Common myeloid progenitor, CD34-positive (primary cell): ENCODE measurements at regions of chr11 and their contacts with region 1.

Region 1: DNA sequence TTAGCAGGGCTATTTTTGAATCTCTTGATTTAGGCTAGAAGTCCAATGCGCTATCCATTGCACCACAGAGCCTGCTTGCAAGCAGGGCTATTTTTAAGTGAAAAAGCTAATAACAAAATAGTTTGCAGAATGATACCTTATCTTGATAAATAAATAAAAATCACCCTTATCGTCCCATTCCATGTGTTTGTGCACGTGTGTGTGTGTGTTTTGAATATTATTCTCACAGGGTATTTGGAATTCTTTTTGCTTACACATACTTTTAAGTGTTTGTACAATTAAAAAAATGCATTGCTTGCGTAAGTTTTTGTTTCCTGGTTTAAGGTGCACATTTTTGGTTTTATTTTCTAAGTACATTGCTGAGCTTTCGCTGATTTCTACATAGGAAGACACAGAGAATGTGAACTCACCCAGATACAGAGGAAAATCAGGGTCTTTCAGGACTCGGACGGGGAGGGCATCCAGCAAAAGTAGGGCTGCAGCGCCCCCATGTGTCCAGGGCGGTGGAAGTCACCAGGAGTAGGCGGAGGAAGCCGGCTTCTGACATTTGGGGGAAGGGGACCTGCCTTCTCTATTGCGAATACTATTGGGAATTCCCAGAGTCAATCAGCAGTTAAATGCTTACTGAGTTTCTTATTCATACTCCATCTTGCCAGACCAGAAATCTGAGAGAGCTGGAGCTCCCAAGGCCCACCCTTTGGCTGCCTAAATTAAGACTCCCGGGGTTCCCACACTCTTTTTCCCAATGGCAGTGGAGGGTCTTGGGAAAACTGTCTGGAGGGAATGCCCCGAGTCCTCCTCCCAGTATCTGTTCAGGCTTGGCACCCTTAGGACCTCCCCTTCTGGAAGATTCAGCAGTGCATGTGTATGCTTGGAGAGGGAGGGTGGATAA is 27.2 kb downstream of the SLC1A2 start:
- DNase-seq: peak; percentile 68 to 79 (median 75)
- H3K4me3 ChIP-seq: peak overlapping the region in 1 of 7 experiments; percentile 38
- H3K27ac ChIP-seq: no peak overlapping the region
- H3K4me1 ChIP-seq: peaks cover 0 to 8% (median 4%) of the 10 kb centered on the region in 4 experiments
- H3K27me3 ChIP-seq: peaks cover 0 to 3% (median 0%) of the 10 kb centered on the region in 5 experiments

Region 2: GRCh38 chr11:34926101-34926830 is 465.9 kb before region 1 on chr11:
- CTCF ChIA-PET with region 1: interaction called, 101 read pairs
- POLR2A ChIA-PET with region 1: interaction called, 6 read pairs
- DNase-seq: peak; percentile 62 to 81 (median 72)
- H3K4me3 ChIP-seq: no peak overlapping the region
- H3K27ac ChIP-seq: no peak overlapping the region
- H3K4me1 ChIP-seq: peaks cover 0 to 18% (median 5%) of the 10 kb centered on the region in 4 experiments
- H3K27me3 ChIP-seq: no peaks in the 10 kb centered on the region

Region 3: DNA sequence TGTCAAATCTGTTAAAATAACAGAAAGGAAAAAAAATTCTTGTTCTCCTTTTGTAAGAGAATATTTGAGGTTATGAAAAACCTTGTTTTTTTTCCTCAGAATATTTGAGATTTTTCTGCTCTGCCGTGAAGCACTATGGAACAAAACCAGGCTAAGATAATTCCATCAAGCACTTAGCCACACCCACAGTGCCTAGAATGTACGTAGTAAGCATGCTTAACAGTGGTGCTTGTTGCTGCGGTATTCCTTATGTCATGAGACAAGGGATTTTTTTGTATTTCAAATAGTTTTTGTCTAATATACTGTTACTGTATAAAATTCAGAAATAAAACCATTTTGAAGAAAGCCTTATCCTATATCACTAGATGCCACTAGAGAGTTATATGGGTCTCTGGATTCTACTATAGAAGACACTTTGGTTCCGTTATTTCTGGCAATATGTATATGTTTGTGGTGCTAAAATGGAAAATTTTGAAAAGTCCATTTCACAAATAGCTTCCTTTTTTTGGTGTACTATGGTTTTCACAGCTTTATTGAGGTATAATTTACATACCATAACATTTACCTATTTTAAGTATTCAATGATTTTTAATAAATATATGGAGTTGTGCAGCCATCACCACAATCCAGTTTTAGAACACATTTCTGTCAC is 452.0 kb before region 1 on chr11:
- CTCF ChIA-PET with region 1: interaction called, 18 read pairs
- POLR2A ChIA-PET with region 1: no interaction called
- DNase-seq: no peak
- H3K4me3 ChIP-seq: no peak overlapping the region
- H3K27ac ChIP-seq: no peak overlapping the region
- H3K4me1 ChIP-seq: peaks cover 3 to 7% (median 5%) of the 10 kb centered on the region in 4 experiments
- H3K27me3 ChIP-seq: no peaks in the 10 kb centered on the region

Region 4: DNA sequence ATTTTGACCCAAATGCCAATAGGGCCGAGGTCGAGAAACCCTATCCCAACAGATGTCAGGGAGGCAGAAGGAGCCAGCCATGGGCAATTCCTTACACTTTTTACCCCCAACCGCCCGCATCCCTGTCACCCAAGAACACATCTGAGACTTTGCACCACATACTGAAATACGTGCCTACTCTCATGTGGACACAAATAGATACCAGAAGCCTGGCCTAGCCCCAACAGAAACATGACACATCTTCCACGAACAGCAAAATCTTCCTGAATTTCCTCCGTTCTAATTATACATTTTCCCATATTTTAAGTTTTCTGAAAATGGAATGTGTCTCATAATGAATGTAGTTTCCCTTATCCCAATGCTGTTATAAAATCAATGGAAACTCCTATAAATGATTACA is 37.5 kb before region 1 on chr11:
- CTCF ChIA-PET with region 1: no interaction called
- POLR2A ChIA-PET with region 1: no interaction called
- DNase-seq: no peak
- H3K4me3 ChIP-seq: no peak overlapping the region
- H3K27ac ChIP-seq: no peak overlapping the region
- H3K4me1 ChIP-seq: peaks cover 0 to 10% (median 2%) of the 10 kb centered on the region in 4 experiments
- H3K27me3 ChIP-seq: no peaks in the 10 kb centered on the region

Region 5: DNA sequence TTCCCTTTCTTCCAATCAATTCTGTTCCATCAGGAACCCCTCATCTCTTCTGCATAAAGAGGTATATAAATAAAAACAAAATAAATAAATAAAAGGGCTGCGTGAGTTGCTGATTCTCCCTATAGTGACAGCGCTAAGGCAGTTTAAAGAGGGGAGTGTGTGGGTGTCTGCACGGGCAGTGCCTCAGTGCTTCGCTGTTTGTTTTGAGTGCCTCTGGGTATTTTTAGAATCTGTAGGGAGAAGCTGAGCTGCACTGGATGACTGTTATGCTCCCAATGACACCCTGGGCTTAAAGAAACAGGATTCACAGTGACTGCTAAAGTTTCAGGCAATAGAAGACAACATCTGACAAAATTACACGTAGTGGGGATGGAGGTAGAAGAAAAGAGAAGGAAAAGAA is 11.6 kb before region 1 on chr11:
- CTCF ChIA-PET with region 1: interaction called, 13 read pairs
- POLR2A ChIA-PET with region 1: no interaction called
- DNase-seq: no peak
- H3K4me3 ChIP-seq: no peak overlapping the region
- H3K27ac ChIP-seq: no peak overlapping the region
- H3K4me1 ChIP-seq: no peaks in the 10 kb centered on the region
- H3K27me3 ChIP-seq: no peaks in the 10 kb centered on the region

Region 6: DNA sequence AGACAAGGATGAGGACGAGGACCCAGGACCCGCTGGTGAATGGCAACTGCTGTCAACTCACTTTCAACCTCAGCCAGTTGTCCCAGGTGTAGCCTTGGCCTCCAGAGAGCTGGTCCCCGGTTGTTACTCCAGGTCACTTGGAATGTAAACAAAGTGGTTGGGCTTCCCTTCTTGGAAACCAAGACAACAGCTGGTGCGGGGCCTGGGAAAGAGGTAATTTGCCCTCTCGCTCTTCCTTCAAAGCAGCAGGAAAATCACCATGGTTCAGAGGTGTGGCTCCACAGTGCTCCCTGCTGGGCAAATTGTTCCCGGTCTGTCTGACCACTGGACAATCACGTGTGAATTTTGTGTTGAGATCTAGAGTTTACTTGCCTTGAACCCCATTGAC is 12.2 kb after region 1 on chr11:
- CTCF ChIA-PET with region 1: interaction called, 11 read pairs
- POLR2A ChIA-PET with region 1: no interaction called
- DNase-seq: no peak
- H3K4me3 ChIP-seq: peak overlapping the region in 1 of 7 experiments; percentile 52
- H3K27ac ChIP-seq: no peak overlapping the region
- H3K4me1 ChIP-seq: no peaks in the 10 kb centered on the region
- H3K27me3 ChIP-seq: peaks cover 0 to 5% (median 0%) of the 10 kb centered on the region in 5 experiments